Calu3 (cell line): ENCODE measurements at regions of chr18 and their contacts with region 1.

Region 1: GRCh38 chr18:3593904-3594661 is 144.1 kb downstream of the TGIF1 start:
- DNase-seq: peak; percentile 84
- H3K4me3 Mint-ChIP-seq: peak overlapping the region; percentile 80
- H3K27ac Mint-ChIP-seq: peak overlapping the region; percentile 99
- H3K4me1 Mint-ChIP-seq: peaks cover 63% of the 10 kb centered on the region
- H3K27me3 Mint-ChIP-seq: no peaks in the 10 kb centered on the region
- CTCF ChIP-seq: peak; percentile 87

Region 2: DNA sequence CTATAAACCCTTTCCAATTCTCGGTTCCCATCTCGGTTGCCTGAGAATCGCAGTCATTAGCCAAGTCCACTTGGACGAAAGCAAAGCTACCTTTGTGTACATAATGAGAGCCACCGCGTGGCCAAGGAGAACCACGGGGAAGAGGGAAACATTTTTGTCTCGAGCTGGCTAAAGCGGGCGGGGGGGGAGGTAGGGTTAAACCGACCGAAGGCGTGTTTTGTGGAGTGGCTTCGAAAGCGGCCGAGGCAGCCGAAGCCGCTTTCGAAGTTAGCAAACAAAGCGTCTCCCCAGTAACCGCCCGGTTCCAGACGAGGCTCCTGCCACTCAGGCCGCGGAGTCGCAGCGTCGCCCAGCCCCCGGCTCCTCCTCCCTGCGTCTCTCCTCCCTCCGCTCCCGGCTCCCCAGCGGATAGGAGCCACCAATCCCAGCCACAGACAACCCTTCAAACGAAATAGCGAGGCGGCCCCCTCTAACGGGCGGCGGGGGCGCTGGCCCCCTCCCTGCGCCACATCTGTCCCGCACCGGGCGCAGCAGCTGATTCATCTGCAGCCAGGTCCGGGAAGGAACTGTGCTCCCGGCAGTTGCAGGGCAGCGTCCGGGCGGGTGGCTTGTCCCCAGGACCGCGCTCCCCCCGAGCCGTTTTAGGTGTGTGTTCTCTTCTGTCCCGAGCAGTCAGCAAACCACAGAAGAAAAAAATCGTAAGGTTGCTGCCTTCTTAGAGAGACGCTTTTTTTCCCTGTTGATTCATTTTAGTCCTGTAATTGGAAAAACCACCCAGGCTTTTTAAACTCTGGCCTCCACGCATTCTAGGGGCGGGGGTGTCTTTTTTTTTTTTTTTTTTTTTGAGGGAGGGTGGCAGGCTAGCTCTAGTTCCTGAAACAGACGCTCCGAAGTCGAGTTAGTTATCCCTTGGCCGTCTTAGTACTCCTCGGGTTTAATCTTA is 145.9 kb before region 1 on chr18:
- CTCF ChIA-PET with region 1: interaction called, 24 read pairs
- intact Hi-C with region 1: no loop called
- DNase-seq: peak; percentile 97
- H3K4me3 Mint-ChIP-seq: peak overlapping the region; percentile 92
- H3K27ac Mint-ChIP-seq: peak overlapping the region; percentile 95
- H3K4me1 Mint-ChIP-seq: peaks cover 7% of the 10 kb centered on the region
- H3K27me3 Mint-ChIP-seq: no peaks in the 10 kb centered on the region
- CTCF ChIP-seq: no peak

Region 3: DNA sequence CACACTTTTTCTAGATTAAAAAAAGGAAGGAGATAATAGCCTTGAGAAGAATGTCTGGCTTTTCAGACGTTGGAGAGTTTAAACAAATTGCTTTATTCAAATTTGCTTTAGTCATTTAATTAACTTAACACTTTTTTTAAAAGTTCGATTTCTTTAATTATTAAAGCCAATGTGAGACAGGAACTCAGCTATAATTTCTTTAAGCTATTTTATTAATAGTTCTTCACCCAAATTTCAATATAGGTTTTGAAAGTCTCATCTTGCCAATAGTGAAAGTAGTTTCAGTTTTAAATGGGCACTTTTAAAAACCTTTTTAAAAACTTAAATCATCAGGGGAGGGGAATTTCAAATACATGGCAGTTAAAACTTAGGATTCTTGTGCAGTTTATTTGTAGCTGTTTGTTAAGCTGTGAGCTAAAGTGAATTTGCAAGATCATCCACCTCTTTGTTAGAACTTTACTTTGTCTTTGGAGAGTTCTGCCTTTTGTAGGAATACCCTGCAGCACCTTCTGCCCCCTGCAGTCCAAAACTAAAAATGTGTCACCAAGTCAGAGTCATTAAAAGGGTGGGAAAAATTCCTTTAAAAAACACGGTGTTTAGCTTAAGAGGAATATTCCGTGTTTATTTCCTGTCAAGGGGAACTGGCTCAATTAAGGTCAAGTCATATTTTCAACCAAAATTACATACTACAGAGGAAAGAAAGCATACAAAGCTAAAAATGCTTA is 139.6 kb before region 1 on chr18:
- CTCF ChIA-PET with region 1: interaction called, 24 read pairs
- intact Hi-C with region 1: loop called (anchors 2 kb)
- DNase-seq: peak; percentile 62
- H3K4me3 Mint-ChIP-seq: peak overlapping the region; percentile 92
- H3K27ac Mint-ChIP-seq: peak overlapping the region; percentile 95
- H3K4me1 Mint-ChIP-seq: peaks cover 37% of the 10 kb centered on the region
- H3K27me3 Mint-ChIP-seq: no peaks in the 10 kb centered on the region
- CTCF ChIP-seq: peak; percentile 71

Region 4: GRCh38 chr18:3508576-3509549 is 85.2 kb before region 1 on chr18:
- CTCF ChIA-PET with region 1: no interaction called
- intact Hi-C with region 1: no loop called
- DNase-seq: no peak
- H3K4me3 Mint-ChIP-seq: no peak overlapping the region
- H3K27ac Mint-ChIP-seq: no peak overlapping the region
- H3K4me1 Mint-ChIP-seq: peaks cover 18% of the 10 kb centered on the region
- H3K27me3 Mint-ChIP-seq: no peaks in the 10 kb centered on the region
- CTCF ChIP-seq: no peak

Region 5: GRCh38 chr18:3604498-3605408 is 10.7 kb after region 1 on chr18:
- CTCF ChIA-PET with region 1: interaction called, 28 read pairs
- intact Hi-C with region 1: loop called (anchors 1 kb)
- DNase-seq: peak; percentile 31
- H3K4me3 Mint-ChIP-seq: no peak overlapping the region
- H3K27ac Mint-ChIP-seq: no peak overlapping the region
- H3K4me1 Mint-ChIP-seq: no peaks in the 10 kb centered on the region
- H3K27me3 Mint-ChIP-seq: no peaks in the 10 kb centered on the region
- CTCF ChIP-seq: no peak

Region 6: GRCh38 chr18:3623769-3624545 is 29.9 kb after region 1 on chr18:
- CTCF ChIA-PET with region 1: interaction called, 35 read pairs
- intact Hi-C with region 1: loop called (anchors 2 kb)
- DNase-seq: peak; percentile 88
- H3K4me3 Mint-ChIP-seq: peak overlapping the region; percentile 63
- H3K27ac Mint-ChIP-seq: peak overlapping the region; percentile 98
- H3K4me1 Mint-ChIP-seq: peaks cover 81% of the 10 kb centered on the region
- H3K27me3 Mint-ChIP-seq: no peaks in the 10 kb centered on the region
- CTCF ChIP-seq: no peak

Region 7: GRCh38 chr18:3665780-3666525 is 71.9 kb after region 1 on chr18:
- CTCF ChIA-PET with region 1: interaction called, 52 read pairs
- intact Hi-C with region 1: loop called (anchors 1 kb)
- DNase-seq: peak; percentile 88
- H3K4me3 Mint-ChIP-seq: peak overlapping the region; percentile 55
- H3K27ac Mint-ChIP-seq: peak overlapping the region; percentile 83
- H3K4me1 Mint-ChIP-seq: peaks cover 40% of the 10 kb centered on the region
- H3K27me3 Mint-ChIP-seq: no peaks in the 10 kb centered on the region
- CTCF ChIP-seq: peak; percentile 93

Region 8: DNA sequence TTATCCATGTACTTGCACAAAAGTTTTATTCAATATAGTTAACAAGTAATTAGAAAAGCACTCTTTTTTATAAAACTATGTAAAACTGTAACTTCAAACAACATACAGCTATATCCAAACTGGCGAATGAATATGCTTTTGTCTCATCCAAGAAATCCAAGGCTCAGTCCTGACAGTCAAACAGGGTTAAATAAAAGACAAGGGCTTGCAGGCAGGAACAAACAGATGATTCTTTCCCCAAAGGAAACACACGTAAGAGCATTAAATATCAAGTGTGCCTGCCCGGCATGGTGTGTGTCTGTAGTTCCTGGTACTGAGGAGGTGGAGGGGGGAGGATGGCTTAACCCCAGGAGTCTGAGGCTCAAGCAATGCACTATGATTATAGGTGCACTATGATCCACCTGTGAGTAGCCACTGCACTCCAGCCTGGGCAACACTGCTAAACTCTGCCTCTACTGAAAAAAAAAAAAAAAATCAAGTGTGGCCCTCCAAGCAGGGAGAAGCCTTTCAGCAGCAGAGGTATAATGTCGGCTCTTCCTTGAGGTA is 689.7 kb after region 1 on chr18:
- CTCF ChIA-PET with region 1: no interaction called
- intact Hi-C with region 1: no loop called
- DNase-seq: no peak
- H3K4me3 Mint-ChIP-seq: no peak overlapping the region
- H3K27ac Mint-ChIP-seq: no peak overlapping the region
- H3K4me1 Mint-ChIP-seq: no peaks in the 10 kb centered on the region
- H3K27me3 Mint-ChIP-seq: no peaks in the 10 kb centered on the region
- CTCF ChIP-seq: no peak